WTC11 (cell line): ENCODE measurements at regions of chr7 and their contacts with region 1.

Region 1: GRCh38 chr7:29793507-29793906 is 12.8 kb upstream of the WIPF3 start:
- DNase-seq: no peak
- ATAC-seq: peak; percentile 99
- H3K4me3 Mint-ChIP-seq: no peak overlapping the region; the same call in 1 of the 2 replicates
- H3K27ac Mint-ChIP-seq: no peak overlapping the region
- H3K4me1 Mint-ChIP-seq: peaks cover 26% of the 10 kb centered on the region
- H3K27me3 Mint-ChIP-seq: no peaks in the 10 kb centered on the region; the same call in 1 of the 2 replicates
- CTCF ChIP-seq: no peak

Region 2: DNA sequence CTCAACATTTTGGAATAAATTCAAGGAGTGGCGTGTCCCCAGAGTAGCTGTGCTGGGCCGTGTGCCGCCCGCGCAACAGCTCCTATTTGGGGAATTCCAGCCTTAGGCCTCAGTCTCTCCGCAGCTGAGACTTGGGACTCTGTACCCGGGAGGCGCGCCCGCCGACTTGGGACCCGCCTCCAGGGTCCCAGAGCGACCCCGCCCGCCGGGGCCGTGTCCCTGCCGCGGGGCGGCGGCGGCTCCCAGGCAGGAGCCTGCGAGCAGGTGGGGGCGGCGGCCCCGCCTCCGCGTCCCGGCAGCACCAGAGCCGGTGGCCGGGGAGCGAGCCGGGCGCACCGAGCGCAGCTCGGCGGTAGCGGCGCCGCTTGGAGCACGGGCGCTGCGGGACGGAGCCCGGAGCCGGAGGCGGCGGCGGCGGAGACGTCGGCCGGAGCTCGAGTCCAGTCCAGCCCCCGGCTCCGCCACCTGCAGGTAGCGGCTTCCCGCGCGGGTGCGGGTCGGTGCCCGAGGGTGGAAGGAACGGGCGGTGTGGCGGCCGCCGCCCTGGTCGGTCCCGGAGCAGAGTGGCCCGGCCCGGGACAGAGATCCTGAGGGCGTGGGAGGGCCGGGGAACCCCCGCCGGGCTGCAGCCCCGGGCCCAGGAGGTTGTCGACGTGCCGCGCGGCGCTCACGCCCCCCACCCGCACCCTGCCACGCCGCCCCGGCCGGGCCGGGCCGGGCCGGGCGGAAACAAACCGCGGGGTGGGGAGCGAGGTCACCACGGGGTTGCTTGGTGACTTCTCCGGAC is 12.9 kb after region 1 on chr7 and contains the start of gene WIPF3:
- CTCF ChIA-PET with region 1: interaction called, 14 read pairs
- POLR2A ChIA-PET with region 1: interaction called, 3 read pairs
- DNase-seq: peak; percentile 70
- ATAC-seq: peak; percentile 74
- H3K4me3 Mint-ChIP-seq: peak within 1 kb of the TSS; percentile 74
- H3K27ac Mint-ChIP-seq: no peak within 1 kb of the TSS
- H3K4me1 Mint-ChIP-seq: peaks cover 20% of the 10 kb centered on the region
- H3K27me3 Mint-ChIP-seq: peaks cover 46% of the 10 kb centered on the region
- CTCF ChIP-seq: no peak
- total RNA-seq, gene WIPF3: 9.9 to 11.4 TPM (median 10.5 TPM) in 3 replicates